Heart left ventricle (tissue), 16 donors: ENCODE measurements at regions of chr2 and their contacts with region 1.

Region 1: GRCh38 chr2:188751816-188752215 is 222.4 kb upstream of the COL3A1 start:
- DNase-seq: no peak
- ATAC-seq: no peak
- H3K4me3 ChIP-seq: no peak overlapping the region
- H3K27ac ChIP-seq: no peak overlapping the region
- H3K4me1 ChIP-seq: no peaks in the 10 kb centered on the region
- H3K27me3 ChIP-seq: no peaks in the 10 kb centered on the region
- CTCF ChIP-seq: no peak
- POLR2A ChIP-seq: no peak

Region 2: DNA sequence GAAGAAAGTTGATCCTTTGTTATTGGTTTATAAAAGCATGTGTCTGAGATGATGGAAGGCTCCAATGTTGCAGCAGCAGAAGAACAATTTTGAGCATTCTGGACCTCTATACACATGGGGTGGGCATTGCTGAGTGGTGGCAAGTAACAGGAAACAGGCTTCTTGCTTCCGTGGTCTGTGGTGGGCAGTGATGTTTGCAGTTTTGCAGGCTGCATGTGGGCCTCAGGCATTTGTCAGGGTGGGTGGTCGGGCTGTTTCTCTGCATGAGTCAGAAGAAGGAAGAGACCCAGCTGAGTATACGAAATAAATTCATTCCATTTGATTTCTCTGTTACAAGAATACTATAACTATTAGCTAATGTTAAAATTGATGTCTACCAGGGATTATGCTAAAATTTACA is 17.1 kb before region 1 on chr2:
- intact Hi-C with region 1: loop called in 1 of 10 experiments (anchors 2 kb)
- DNase-seq: no peak
- ATAC-seq: no peak
- H3K4me3 ChIP-seq: no peak overlapping the region
- H3K27ac ChIP-seq: no peak overlapping the region
- H3K4me1 ChIP-seq: peaks cover 0 to 3% (median 0%) of the 10 kb centered on the region in 12 donors
- H3K27me3 ChIP-seq: no peaks in the 10 kb centered on the region
- CTCF ChIP-seq: no peak
- POLR2A ChIP-seq: no peak